Lower leg skin (tissue), 4 donors: ENCODE measurements at regions of chr21 and their contacts with region 1.

Region 1: DNA sequence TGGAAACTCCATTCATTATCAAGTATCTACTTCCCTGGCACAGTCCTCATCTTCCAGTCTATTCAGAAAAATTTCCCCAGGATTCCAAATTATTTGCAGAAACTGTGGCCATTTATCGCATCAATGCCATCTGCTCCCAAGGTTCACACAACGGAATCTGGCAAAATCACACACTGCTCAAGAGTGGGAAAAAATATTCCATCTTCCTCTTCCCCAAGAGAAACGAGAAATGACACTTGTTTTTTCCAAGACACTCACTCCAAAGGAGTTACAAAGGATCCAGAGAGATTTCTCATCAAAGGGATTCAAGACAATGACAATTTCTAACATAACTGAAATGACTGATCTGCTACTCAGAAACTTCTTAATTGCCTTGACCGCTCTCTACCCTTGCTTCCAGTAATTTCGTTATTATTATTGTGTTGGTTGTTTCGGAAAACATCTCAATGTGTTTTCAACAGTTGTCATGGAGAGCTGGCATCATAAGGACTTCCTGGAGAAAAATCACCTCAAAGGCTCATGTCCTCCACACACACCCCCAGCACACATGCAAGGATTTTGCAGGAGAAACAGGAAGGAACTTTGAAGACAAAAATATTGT is 128.0 kb downstream of the PSMG1 start:
- DNase-seq: no peak
- H3K4me3 ChIP-seq: no peak overlapping the region
- CTCF ChIP-seq: no peak
- POLR2A ChIP-seq: no peak

Region 2: GRCh38 chr21:38505654-38506515 is 549.4 kb before region 1 on chr21:
- intact Hi-C with region 1: loop called (anchors 5 kb)
- DNase-seq: peak in 1 of 2 donors; percentile 46
- H3K4me3 ChIP-seq: no peak overlapping the region
- CTCF ChIP-seq: no peak
- POLR2A ChIP-seq: no peak

Region 3: DNA sequence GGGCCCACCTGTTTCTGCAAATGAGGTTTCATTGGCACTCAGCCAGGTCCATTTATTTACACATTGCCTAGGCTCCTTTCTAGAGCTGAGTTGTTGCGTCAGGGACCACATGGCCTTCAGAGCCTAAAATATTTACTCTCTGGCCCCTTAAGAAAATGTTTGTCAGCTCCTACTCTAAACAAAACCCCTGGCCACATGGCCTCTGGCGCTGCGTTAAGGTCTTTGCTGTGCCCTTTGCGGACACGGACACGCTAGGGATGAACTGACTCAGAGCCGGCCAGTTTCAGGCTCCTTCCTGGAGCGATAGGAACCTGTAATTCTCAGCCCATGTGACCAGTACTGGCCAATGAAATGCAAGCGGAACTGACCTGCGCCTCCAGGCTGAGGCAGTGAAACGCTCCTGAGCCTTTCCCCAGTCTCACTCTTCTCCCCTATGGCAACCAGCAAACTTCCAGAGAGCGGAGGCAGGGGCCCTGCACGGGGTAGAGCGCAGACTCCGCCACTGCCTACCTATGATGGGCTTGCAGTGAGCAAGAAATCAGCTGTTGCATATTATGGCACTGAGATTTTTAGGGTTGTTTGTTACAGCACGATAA is 89.3 kb before region 1 on chr21:
- intact Hi-C with region 1: no loop called
- DNase-seq: no peak
- H3K4me3 ChIP-seq: no peak overlapping the region
- CTCF ChIP-seq: no peak
- POLR2A ChIP-seq: no peak